ENCODE measurements at regions of chr20 and their contacts with region 1.

Region 1: GRCh38 chr20:21125849-21126580 is at the start of gene KIZ:
- DNase-seq: peak; percentile 99
- total RNA-seq, gene KIZ: 22.9 TPM

Region 2: DNA sequence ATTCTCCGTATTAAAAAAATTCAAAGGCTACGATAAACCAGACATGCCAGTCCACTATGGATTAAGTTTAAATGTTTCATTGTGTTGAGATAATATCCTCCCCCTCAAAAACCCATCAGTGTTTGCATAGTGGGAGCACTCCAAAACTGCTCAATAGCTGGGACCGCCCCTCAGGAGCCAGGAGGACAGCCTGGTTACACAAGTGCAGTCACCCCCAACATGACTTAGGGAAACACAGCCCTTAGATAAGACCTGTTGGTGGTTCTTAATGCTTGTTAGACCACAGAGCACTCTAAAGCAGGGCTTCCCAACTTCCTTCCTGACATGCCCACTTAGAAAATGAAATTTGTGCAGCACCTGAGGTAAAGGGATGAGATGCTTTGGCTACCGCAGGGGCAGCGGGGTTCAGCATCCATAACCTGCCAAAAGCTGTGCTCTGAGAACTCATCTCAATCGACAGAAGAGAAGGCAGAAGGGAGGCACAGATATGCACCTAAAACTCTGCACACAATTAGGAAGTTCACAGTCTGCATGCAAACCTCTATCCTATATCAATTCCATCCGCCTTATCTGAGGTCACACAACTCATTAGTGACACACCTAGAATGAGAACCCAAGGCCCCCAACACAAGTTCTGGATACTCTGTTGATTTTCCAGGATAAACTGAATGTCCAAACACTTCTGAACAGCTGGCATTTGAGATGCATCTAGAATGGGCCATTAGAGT is 487.9 kb before region 1 on chr20:
- intact Hi-C with region 1: no loop called
- DNase-seq: no peak

Region 3: GRCh38 chr20:21303061-21303871 is 177.3 kb after region 1 on chr20 and contains the start of gene XRN2:
- intact Hi-C with region 1: loop called (anchors 2 kb)
- DNase-seq: peak; percentile 98
- total RNA-seq, gene XRN2: 33.4 TPM